ENCODE measurements at regions of chr16 and their contacts with region 1.

Region 1: DNA sequence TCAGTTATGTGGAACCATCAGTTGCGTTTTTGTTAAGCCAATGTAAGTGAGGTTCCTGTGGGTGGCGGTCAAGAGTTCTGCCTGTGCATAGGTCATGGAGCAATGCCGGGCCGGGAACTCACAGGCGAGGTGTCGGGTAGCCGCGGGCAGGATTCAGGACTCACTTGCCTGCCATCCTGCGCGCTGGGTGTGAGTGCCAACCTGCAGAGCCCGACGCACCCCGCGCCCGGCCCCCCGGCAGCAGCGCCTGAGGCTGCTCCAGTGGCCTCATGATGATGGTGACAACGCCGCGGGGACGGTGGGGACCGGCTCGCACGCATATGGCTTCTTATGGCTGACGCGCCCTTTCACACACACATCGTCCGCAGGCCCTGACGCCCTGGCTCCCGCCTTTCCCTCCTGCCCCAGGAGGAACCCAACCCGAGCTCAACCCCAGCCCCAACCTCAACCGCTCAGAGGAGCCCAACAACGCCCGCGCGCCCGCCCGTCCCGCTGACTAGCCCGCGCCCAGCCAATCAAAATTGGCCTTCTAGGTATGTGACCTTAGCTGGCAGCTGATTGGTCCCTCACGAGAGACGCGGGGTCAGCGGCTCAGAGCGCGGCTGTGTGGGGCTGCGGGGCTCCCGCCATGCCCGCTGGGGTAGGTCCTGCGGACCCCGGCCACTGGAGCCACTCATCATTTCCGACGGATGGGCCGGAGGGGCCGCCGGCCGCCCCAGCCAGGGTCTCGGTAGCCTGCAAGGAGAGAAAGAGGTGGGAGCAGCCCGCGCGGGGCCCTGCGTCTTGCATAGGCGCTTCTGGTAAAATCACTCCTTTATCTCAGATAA is at the start of gene C16orf95:
- DNase-seq: peak; percentile 97
- H3K4me3 Mint-ChIP-seq: peak within 1 kb of the TSS; percentile 95
- H3K27ac Mint-ChIP-seq: peak within 1 kb of the TSS; percentile 97
- H3K4me1 Mint-ChIP-seq: peaks cover 23% of the 10 kb centered on the region
- H3K27me3 Mint-ChIP-seq: peaks cover 4% of the 10 kb centered on the region

Region 2: GRCh38 chr16:87393680-87394055 is 76.5 kb after region 1 on chr16:
- CTCF ChIA-PET with region 1: interaction called, 11 read pairs
- DNase-seq: no peak
- H3K4me3 Mint-ChIP-seq: peak overlapping the region; percentile 90
- H3K27ac Mint-ChIP-seq: peak overlapping the region; percentile 93
- H3K4me1 Mint-ChIP-seq: peaks cover 41% of the 10 kb centered on the region
- H3K27me3 Mint-ChIP-seq: no peaks in the 10 kb centered on the region

Region 3: GRCh38 chr16:87441886-87442580 is 124.9 kb after region 1 on chr16:
- CTCF ChIA-PET with region 1: no interaction called
- DNase-seq: no peak
- H3K4me3 Mint-ChIP-seq: no peak overlapping the region
- H3K27ac Mint-ChIP-seq: no peak overlapping the region
- H3K4me1 Mint-ChIP-seq: peaks cover under 1% of the 10 kb centered on the region
- H3K27me3 Mint-ChIP-seq: peaks cover 4% of the 10 kb centered on the region

Measured in activated naive CD4-positive, alpha-beta T cell treated with anti-CD3 and anti-CD28 coated beads, Interleukin-2, amount 10 ng/mL, durations not matched to agents 7 days and 5 days (primary cell).